Activated B cell treated with CpG ODN at 0.5 μM for 24 hours (primary cell): ENCODE measurements at regions of chr3 and their contacts with region 1.

Region 1: GRCh38 chr3:50227390-50228183 is 8.4 kb upstream of the GNAI2 start:
- DNase-seq: peak; percentile 93
- ATAC-seq: peak; percentile 81
- H3K4me3 Mint-ChIP-seq: peak overlapping the region; percentile 94
- H3K27ac Mint-ChIP-seq: peak overlapping the region; percentile 88
- H3K4me1 Mint-ChIP-seq: peaks cover 40% of the 10 kb centered on the region
- H3K27me3 Mint-ChIP-seq: peaks cover 5% of the 10 kb centered on the region
- CTCF ChIP-seq: peak; percentile 92

Region 2: GRCh38 chr3:49703443-49703927 is 524.1 kb before region 1 on chr3:
- CTCF ChIA-PET with region 1: no interaction called
- POLR2A ChIA-PET with region 1: no interaction called
- intact Hi-C with region 1: loop called (anchors 1 kb)
- DNase-seq: peak; percentile 54
- ATAC-seq: peak; percentile 100
- H3K4me3 Mint-ChIP-seq: no peak overlapping the region
- H3K27ac Mint-ChIP-seq: peak overlapping the region; percentile 41
- H3K4me1 Mint-ChIP-seq: peaks cover 4% of the 10 kb centered on the region
- H3K27me3 Mint-ChIP-seq: no peaks in the 10 kb centered on the region
- CTCF ChIP-seq: no peak

Region 3: GRCh38 chr3:50245831-50246516 is 18.4 kb after region 1 on chr3:
- CTCF ChIA-PET with region 1: interaction called, 104 read pairs
- POLR2A ChIA-PET with region 1: interaction called, 66 read pairs
- intact Hi-C with region 1: loop called (anchors 1 kb)
- DNase-seq: peak; percentile 95
- ATAC-seq: peak; percentile 72
- H3K4me3 Mint-ChIP-seq: peak overlapping the region; percentile 75
- H3K27ac Mint-ChIP-seq: peak overlapping the region; percentile 94
- H3K4me1 Mint-ChIP-seq: peaks cover 88% of the 10 kb centered on the region
- H3K27me3 Mint-ChIP-seq: no peaks in the 10 kb centered on the region
- CTCF ChIP-seq: peak; percentile 79

Region 4: GRCh38 chr3:50272911-50273693 is 45.5 kb after region 1 on chr3:
- CTCF ChIA-PET with region 1: interaction called, 6 read pairs
- POLR2A ChIA-PET with region 1: no interaction called
- intact Hi-C with region 1: loop called (anchors 1 kb)
- DNase-seq: peak; percentile 91
- ATAC-seq: peak; percentile 98
- H3K4me3 Mint-ChIP-seq: peak overlapping the region; percentile 69
- H3K27ac Mint-ChIP-seq: no peak overlapping the region
- H3K4me1 Mint-ChIP-seq: peaks cover 25% of the 10 kb centered on the region
- H3K27me3 Mint-ChIP-seq: peaks cover 35% of the 10 kb centered on the region
- CTCF ChIP-seq: no peak

Region 5: GRCh38 chr3:50298836-50299637 is 71.5 kb after region 1 on chr3 and contains the starts of genes HYAL3 and NAA80:
- CTCF ChIA-PET with region 1: interaction called, 3 read pairs
- POLR2A ChIA-PET with region 1: no interaction called
- intact Hi-C with region 1: loop called (anchors 2 kb)
- DNase-seq: peak; percentile 98
- ATAC-seq: peak; percentile 89
- H3K4me3 Mint-ChIP-seq: peak within 1 kb of the TSS; percentile 98
- H3K27ac Mint-ChIP-seq: peak within 1 kb of the TSS; percentile 98
- H3K4me1 Mint-ChIP-seq: peaks cover 30% of the 10 kb centered on the region
- H3K27me3 Mint-ChIP-seq: no peaks in the 10 kb centered on the region
- CTCF ChIP-seq: no peak
- total RNA-seq, gene HYAL3: 2.0 and 2.5 TPM in 2 replicates
- total RNA-seq, gene NAA80: 23.9 and 24.8 TPM in 2 replicates